ENCODE measurements at regions of chr2 and their contacts with region 1.

Region 1: GRCh38 chr2:27032495-27033252 is at the start of gene TMEM214:
- DNase-seq: peak; percentile 96
- H3K4me3 Mint-ChIP-seq: peak within 1 kb of the TSS; percentile 94
- H3K27ac Mint-ChIP-seq: peak within 1 kb of the TSS; percentile 89
- H3K4me1 Mint-ChIP-seq: peaks cover 45% of the 10 kb centered on the region
- H3K27me3 Mint-ChIP-seq: no peaks in the 10 kb centered on the region
- total RNA-seq, gene TMEM214: 93.4 and 98.6 TPM in 2 replicates

Region 2: GRCh38 chr2:26785431-26786206 is 247.1 kb before region 1 on chr2 and contains the start of gene CENPA:
- intact Hi-C with region 1: loop called (anchors 5 kb)
- DNase-seq: peak; percentile 98
- H3K4me3 Mint-ChIP-seq: peak within 1 kb of the TSS; percentile 90
- H3K27ac Mint-ChIP-seq: peak within 1 kb of the TSS; percentile 85
- H3K4me1 Mint-ChIP-seq: peaks cover 31% of the 10 kb centered on the region
- H3K27me3 Mint-ChIP-seq: no peaks in the 10 kb centered on the region
- total RNA-seq, gene CENPA: 21.8 and 23.6 TPM in 2 replicates

Region 3: GRCh38 chr2:26970244-26970920 is 62.3 kb before region 1 on chr2 and contains the start of gene MAPRE3:
- intact Hi-C with region 1: loop called (anchors 5 kb)
- DNase-seq: peak; percentile 95
- H3K4me3 Mint-ChIP-seq: peak within 1 kb of the TSS; percentile 86
- H3K27ac Mint-ChIP-seq: peak within 1 kb of the TSS; percentile 74
- H3K4me1 Mint-ChIP-seq: peaks cover 17% of the 10 kb centered on the region
- H3K27me3 Mint-ChIP-seq: peaks cover 57% of the 10 kb centered on the region
- total RNA-seq, gene MAPRE3: 2.5 and 3.6 TPM in 2 replicates

Region 4: DNA sequence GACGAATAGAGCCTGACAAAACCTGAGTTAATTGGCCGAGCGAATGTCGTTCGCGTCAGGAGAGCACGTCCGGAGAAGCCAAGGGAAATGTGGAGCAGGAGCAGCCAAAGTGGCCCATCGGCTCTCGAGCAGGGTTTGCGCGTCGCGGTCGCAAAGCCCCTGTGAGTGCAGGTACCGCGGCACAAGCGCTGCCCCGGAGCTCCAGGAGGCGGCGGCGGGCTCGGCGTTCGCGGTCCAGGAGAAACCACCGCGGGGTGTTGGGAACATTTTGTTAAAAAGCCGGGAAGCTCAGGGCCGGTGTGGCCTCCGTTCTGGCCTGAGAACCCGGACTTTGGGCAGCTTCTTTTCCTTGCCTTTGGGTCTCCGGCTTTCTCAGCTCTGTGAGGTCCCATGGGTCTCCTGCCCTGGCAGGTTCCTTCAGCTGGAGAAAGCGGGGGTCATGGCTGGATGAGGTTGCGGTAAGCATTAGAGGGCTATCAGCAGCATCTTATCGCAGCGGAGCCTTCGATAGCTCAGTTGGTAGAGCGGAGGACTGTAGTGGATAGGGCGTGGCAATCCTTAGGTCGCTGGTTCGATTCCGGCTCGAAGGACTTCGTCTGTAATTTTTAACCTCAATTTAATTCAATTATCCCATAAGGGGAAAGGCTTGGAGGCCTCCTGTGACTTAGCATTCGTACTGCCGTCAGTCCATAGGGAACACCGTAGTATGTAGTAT is 17.8 kb after region 1 on chr2:
- intact Hi-C with region 1: loop called (anchors 1 kb)
- DNase-seq: peak; percentile 98
- H3K4me3 Mint-ChIP-seq: peak overlapping the region; percentile 90
- H3K27ac Mint-ChIP-seq: peak overlapping the region; percentile 99
- H3K4me1 Mint-ChIP-seq: peaks cover 22% of the 10 kb centered on the region
- H3K27me3 Mint-ChIP-seq: peaks cover 5% of the 10 kb centered on the region

Region 5: GRCh38 chr2:27071277-27071989 is 38.8 kb after region 1 on chr2 and contains the start of gene OST4:
- intact Hi-C with region 1: loop called (anchors 1 kb)
- DNase-seq: peak; percentile 98
- H3K4me3 Mint-ChIP-seq: peak within 1 kb of the TSS; percentile 99
- H3K27ac Mint-ChIP-seq: peak within 1 kb of the TSS; percentile 93
- H3K4me1 Mint-ChIP-seq: peaks cover 58% of the 10 kb centered on the region
- H3K27me3 Mint-ChIP-seq: no peaks in the 10 kb centered on the region
- total RNA-seq, gene OST4: 314 and 326 TPM in 2 replicates

Region 6: DNA sequence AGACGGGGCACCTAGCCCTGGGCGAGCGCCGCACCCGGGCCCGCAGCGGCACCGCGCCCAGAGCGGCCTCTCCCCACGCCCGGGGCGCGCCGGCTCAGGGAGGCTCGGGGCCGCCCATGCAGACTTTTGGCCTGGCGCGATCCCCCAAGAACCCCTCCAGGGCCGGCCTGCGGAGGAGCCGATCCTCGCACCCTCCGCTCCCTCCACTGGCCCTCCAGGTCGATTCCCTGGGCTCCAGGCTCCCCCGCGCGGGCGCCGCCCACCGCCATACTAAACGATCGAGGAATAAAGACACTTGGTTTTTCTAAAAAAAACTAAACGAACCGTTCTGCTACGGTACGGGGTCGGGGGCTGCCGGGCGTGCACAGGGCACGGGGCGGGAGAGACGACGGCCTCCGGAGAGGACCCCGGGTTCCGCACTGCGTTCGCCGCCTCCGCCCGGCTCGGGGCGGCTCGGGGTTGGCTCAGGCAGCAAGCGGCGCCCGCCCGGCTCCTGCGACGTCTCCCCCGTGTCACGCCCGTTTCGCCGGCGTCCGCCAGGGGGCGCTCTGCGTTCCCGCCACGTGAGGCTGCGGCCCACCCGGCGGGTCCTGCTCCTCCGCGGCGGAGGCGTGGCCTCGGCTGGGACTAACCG is 53.5 kb after region 1 on chr2:
- intact Hi-C with region 1: loop called (anchors 1 kb)
- DNase-seq: peak; percentile 100
- H3K4me3 Mint-ChIP-seq: peak overlapping the region; percentile 90
- H3K27ac Mint-ChIP-seq: peak overlapping the region; percentile 91
- H3K4me1 Mint-ChIP-seq: peaks cover 30% of the 10 kb centered on the region
- H3K27me3 Mint-ChIP-seq: no peaks in the 10 kb centered on the region

Measured in activated CD4-positive, alpha-beta T cell treated with anti-CD3 and anti-CD28 coated beads, Interleukin-2, amount 10 ng/mL, durations not matched to agents 24 days and 14 days (primary cell).